ENCODE measurements at regions of chr9 and their contacts with region 1.

Region 1: GRCh38 chr9:137691646-137692351 is 73.0 kb downstream of the EHMT1 start:
- DNase-seq: no peak
- ATAC-seq: no peak
- H3K4me3 ChIP-seq: no peak overlapping the region
- H3K27ac ChIP-seq: no peak overlapping the region
- H3K4me1 ChIP-seq: no peaks in the 10 kb centered on the region; the same call in 1 of the 2 replicates
- H3K27me3 ChIP-seq: no peaks in the 10 kb centered on the region
- CTCF ChIP-seq: no peak

Region 2: GRCh38 chr9:137583347-137583746 is 108.5 kb before region 1 on chr9:
- CTCF ChIA-PET with region 1: no interaction called
- POLR2A ChIA-PET with region 1: interaction called, 11 read pairs
- in situ Hi-C with region 1: no loop called
- intact Hi-C with region 1: no loop called
- DNase-seq: no peak
- ATAC-seq: no peak
- H3K4me3 ChIP-seq: no peak overlapping the region
- H3K27ac ChIP-seq: no peak overlapping the region
- H3K4me1 ChIP-seq: no peaks in the 10 kb centered on the region
- H3K27me3 ChIP-seq: no peaks in the 10 kb centered on the region
- CTCF ChIP-seq: no peak

Region 3: DNA sequence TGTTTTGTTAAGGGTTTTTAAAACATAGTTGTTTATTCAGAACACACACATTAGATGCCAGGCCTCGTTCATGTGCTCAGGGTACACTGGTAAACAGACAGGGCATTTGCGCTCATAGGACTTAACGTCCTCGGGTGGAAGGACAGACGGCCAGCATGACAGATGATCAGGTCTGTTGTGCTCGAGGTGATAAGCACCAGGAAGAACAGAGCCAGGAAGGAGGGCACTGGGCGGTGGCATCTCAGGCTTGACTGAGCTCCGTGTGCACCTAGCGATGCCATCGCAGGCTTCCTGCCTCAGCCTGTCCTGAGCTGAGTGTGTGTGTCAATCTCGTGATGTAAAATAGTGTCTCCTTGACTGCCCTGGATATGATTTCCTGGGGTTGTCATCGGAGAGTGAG is 23.5 kb after region 1 on chr9:
- CTCF ChIA-PET with region 1: no interaction called
- POLR2A ChIA-PET with region 1: no interaction called
- in situ Hi-C with region 1: no loop called
- intact Hi-C with region 1: no loop called
- DNase-seq: no peak
- ATAC-seq: no peak
- H3K4me3 ChIP-seq: no peak overlapping the region
- H3K27ac ChIP-seq: no peak overlapping the region
- H3K4me1 ChIP-seq: no peaks in the 10 kb centered on the region
- H3K27me3 ChIP-seq: no peaks in the 10 kb centered on the region
- CTCF ChIP-seq: no peak